ENCODE measurements at regions of chr7 and their contacts with region 1.

Region 1: DNA sequence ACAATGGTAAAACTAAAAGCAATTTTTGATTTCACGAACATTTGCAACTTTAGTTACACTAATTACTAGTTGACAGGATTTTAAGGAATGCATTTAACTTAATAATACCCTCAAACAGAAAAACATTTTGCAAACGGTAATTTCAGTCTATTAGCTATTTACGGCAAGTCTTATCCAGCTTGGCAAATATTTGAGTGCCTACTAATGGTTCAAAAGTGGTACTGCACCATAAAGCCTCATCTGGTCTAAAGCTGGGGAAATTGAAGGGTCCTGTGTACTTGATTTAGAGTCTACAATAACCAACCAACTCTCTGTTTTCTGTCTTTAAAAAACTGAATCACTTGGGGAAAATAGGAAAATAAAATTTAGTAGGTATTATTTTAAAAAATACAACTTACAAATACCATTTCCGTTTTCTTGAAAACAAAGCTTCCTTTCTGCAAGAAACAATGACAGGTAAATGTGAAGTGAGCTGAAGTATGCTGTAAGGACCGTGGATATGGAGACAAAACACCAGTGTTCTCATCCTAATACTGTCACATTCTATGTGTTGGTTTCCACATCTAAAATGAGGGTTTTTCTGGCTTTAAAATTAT is 142.3 kb downstream of the VPS50 start:
- DNase-seq: no peak
- ATAC-seq: peak; percentile 94
- H3K4me3 Mint-ChIP-seq: no peak overlapping the region
- H3K27ac Mint-ChIP-seq: no peak overlapping the region
- H3K4me1 Mint-ChIP-seq: peaks cover 9% of the 10 kb centered on the region
- H3K27me3 Mint-ChIP-seq: no peaks in the 10 kb centered on the region; the same call in 1 of the 2 replicates
- CTCF ChIP-seq: peak; percentile 49

Region 2: GRCh38 chr7:93231799-93232672 is 142.4 kb before region 1 on chr7 and contains the start of gene VPS50:
- CTCF ChIA-PET with region 1: interaction called, 11 read pairs
- POLR2A ChIA-PET with region 1: no interaction called
- DNase-seq: peak; percentile 91
- ATAC-seq: peak; percentile 97
- H3K4me3 Mint-ChIP-seq: peak within 1 kb of the TSS; percentile 99
- H3K27ac Mint-ChIP-seq: peak within 1 kb of the TSS; percentile 99
- H3K4me1 Mint-ChIP-seq: no peaks in the 10 kb centered on the region
- H3K27me3 Mint-ChIP-seq: peaks cover 4% of the 10 kb centered on the region
- CTCF ChIP-seq: no peak
- total RNA-seq, gene VPS50: 9.2 to 11.2 TPM (median 10.4 TPM) in 3 replicates

Region 3: GRCh38 chr7:93245525-93246432 is 128.7 kb before region 1 on chr7:
- CTCF ChIA-PET with region 1: interaction called, 14 read pairs
- POLR2A ChIA-PET with region 1: no interaction called
- DNase-seq: no peak
- ATAC-seq: no peak
- H3K4me3 Mint-ChIP-seq: no peak overlapping the region
- H3K27ac Mint-ChIP-seq: no peak overlapping the region
- H3K4me1 Mint-ChIP-seq: no peaks in the 10 kb centered on the region
- H3K27me3 Mint-ChIP-seq: no peaks in the 10 kb centered on the region
- CTCF ChIP-seq: peak; percentile 73

Region 4: GRCh38 chr7:93359520-93360198 is 14.8 kb before region 1 on chr7:
- CTCF ChIA-PET with region 1: interaction called, 17 read pairs
- POLR2A ChIA-PET with region 1: no interaction called
- DNase-seq: no peak
- ATAC-seq: no peak
- H3K4me3 Mint-ChIP-seq: no peak overlapping the region
- H3K27ac Mint-ChIP-seq: no peak overlapping the region
- H3K4me1 Mint-ChIP-seq: no peaks in the 10 kb centered on the region
- H3K27me3 Mint-ChIP-seq: no peaks in the 10 kb centered on the region
- CTCF ChIP-seq: no peak

Region 5: DNA sequence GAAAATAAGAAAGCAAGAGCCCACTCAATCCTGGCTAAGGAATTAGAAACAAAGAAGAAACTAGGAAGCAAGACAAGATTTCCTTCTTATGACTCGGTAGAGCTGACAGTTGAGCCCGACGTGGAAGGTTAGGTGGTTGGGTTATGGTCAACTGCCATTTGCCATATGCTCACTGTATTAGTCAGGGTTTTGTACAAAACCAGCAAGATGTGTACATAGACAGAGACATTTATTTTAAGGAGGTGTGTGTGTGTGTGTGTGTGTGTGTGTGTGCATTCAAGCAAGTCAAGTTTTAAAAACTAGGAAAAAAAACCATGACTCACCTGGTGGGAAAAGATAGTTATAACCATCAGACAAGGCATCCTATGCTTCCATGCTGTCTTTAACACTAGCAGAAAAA is 16.2 kb after region 1 on chr7:
- CTCF ChIA-PET with region 1: interaction called, 19 read pairs
- POLR2A ChIA-PET with region 1: interaction called, 3 read pairs
- DNase-seq: no peak
- ATAC-seq: no peak
- H3K4me3 Mint-ChIP-seq: no peak overlapping the region
- H3K27ac Mint-ChIP-seq: no peak overlapping the region
- H3K4me1 Mint-ChIP-seq: peaks cover 14% of the 10 kb centered on the region
- H3K27me3 Mint-ChIP-seq: peaks cover 45% of the 10 kb centered on the region
- CTCF ChIP-seq: no peak

Measured in WTC11 (cell line).